WTC11 (cell line): ENCODE measurements at regions of chr22 and their contacts with region 1.

Region 1: GRCh38 chr22:35930933-35931332 is 97.7 kb downstream of the RBFOX2 start:
- DNase-seq: no peak
- ATAC-seq: peak; percentile 51; the same call in 1 of the 2 replicates
- H3K4me3 Mint-ChIP-seq: no peak overlapping the region
- H3K27ac Mint-ChIP-seq: no peak overlapping the region
- H3K4me1 Mint-ChIP-seq: peaks cover 20% of the 10 kb centered on the region
- H3K27me3 Mint-ChIP-seq: no peaks in the 10 kb centered on the region
- CTCF ChIP-seq: no peak

Region 2: GRCh38 chr22:36123673-36124630 is 193.0 kb after region 1 on chr22:
- CTCF ChIA-PET with region 1: interaction called, 12 read pairs
- POLR2A ChIA-PET with region 1: no interaction called
- DNase-seq: peak; percentile 95
- ATAC-seq: peak; percentile 95
- H3K4me3 Mint-ChIP-seq: peak overlapping the region; percentile 39; the same call in 1 of the 2 replicates
- H3K27ac Mint-ChIP-seq: peak overlapping the region; percentile 91
- H3K4me1 Mint-ChIP-seq: peaks cover 15% of the 10 kb centered on the region
- H3K27me3 Mint-ChIP-seq: peaks cover 20% of the 10 kb centered on the region
- CTCF ChIP-seq: peak; percentile 93